Body of pancreas (tissue), 4 donors: ENCODE measurements at regions of chr16 and their contacts with region 1.

Region 1: DNA sequence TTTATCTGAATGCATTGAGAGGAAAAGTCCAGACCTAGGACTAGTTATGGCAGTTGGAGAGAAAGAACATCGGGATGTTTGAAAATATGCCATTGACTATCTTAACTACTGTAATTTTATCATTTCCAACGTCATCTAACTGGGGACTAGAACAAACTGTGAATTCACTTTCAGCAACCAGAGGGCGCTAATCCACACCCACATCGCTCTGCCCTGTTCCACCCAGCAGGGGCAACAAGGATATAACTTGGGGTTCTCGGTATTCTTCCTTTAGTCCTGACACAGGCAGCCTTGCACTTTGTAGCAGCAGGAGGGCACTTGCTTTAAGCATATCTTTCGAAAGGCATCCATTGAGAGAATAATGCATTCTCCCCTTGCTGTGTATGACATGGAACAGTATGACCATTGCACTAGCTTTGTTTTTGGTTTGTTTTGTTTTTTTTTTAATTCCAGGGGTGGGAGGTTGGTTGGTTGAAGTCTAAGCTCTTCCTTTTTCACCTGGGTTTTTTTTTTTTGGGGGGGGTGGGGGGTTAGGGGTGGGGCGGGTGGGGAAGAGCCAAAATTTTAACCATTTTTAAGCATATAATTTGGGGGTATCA is 31.5 kb downstream of the SIAH1 start:
- DNase-seq: peak; percentile 61 to 77 (median 68)
- ATAC-seq: peak; percentile 88
- H3K4me3 ChIP-seq: no peak overlapping the region
- H3K27ac ChIP-seq: no peak overlapping the region
- H3K4me1 ChIP-seq: no peaks in the 10 kb centered on the region
- H3K27me3 ChIP-seq: no peaks in the 10 kb centered on the region
- CTCF ChIP-seq: peak; percentile 72 to 97 (median 88)
- POLR2A ChIP-seq: no peak

Region 2: GRCh38 chr16:48284772-48285409 is 68.8 kb before region 1 on chr16:
- intact Hi-C with region 1: no loop called
- DNase-seq: no peak
- ATAC-seq: no peak
- H3K4me3 ChIP-seq: no peak overlapping the region
- H3K27ac ChIP-seq: peak overlapping the region in 1 of 4 donors; percentile 25
- H3K4me1 ChIP-seq: peaks cover 19% of the 10 kb centered on the region
- H3K27me3 ChIP-seq: no peaks in the 10 kb centered on the region
- CTCF ChIP-seq: no peak
- POLR2A ChIP-seq: no peak

Region 3: DNA sequence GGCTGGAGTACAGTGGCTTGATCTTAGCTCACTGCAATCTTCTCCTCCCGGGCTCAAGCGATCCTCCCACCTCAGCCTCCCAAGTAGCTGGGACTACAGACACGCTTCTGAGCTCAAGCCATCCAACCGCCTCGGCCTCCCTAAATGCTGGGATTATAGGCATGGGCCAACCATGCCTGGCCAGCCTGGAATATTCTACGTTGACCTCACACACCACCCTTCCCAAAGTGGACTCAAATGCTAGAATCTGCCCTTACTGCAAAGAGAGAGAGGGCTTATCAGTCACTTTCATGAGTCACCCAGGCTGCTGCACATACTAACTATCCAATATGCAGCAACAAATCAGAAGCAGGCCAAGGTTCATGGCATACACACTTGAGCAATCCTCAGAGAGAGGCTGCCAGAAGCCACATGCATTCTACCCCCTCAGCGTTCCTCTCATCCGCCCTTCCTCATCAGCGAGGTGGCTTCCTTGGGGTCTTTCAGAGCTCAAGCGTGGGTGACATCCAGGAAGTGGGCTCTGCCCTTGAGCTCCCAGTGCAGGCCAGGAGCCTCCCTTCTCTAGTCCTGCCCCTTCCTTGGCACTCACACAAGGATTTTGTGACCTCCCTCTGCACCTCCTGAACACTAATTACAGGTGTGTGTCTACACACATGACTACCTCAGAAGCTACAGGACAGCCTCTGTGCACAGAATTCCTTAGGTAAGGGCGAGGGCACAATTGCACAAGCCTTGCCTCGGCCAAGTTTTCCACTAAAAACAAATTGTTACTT is 56.4 kb after region 1 on chr16:
- intact Hi-C with region 1: no loop called
- DNase-seq: peak in 3 of 4 donors; percentile 10 to 76 (median 63)
- ATAC-seq: peak; percentile 68
- H3K4me3 ChIP-seq: no peak overlapping the region
- H3K27ac ChIP-seq: peak overlapping the region in 3 of 4 donors; percentile 12 to 59 (median 56)
- H3K4me1 ChIP-seq: peaks cover 9% of the 10 kb centered on the region
- H3K27me3 ChIP-seq: no peaks in the 10 kb centered on the region
- CTCF ChIP-seq: no peak
- POLR2A ChIP-seq: no peak

Region 4: DNA sequence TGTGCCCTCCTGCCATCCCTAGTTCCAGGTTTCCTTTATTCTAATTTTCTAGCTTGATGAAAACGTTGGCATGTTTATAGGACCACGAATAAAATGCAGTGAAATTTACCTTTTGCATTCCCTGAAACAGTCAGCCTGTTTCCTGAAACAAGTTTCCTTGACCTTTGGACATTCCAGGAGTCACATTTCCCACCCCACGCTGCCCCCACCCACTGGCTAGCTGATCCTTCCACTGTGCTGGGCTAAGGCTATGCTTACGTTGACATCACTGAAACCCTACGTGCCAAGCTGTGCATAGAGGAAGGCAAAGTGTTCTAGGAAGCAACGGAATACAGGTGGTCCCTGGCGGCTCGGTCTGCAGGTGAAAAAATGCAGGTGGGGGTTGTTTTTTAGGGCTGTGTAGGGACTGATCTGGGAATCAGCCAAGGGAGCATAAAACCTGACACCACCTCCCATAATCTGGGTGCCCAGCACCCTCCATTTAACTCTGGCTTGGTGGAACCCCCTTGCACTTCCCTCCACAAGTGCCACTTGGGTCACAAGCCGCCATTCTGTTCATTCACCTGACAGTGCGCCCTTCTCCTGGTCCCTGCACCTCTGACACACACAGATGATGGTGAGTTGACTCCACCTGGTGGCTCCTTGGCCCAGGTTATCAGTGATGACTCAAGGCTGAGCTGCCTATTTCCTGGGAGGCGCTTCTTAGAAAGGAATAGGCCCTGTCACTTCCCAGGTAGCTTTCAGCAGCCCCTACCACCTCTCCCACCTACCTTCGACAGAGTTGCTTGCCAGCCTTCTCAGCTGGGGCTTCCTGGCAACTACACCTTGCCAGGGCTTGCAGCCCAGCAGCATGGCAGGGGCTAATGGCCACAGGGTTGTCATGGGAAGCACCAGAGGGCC is 172.6 kb after region 1 on chr16:
- intact Hi-C with region 1: loop called (anchors 10 kb)
- DNase-seq: peak; percentile 38 to 67 (median 60)
- ATAC-seq: peak; percentile 67
- H3K4me3 ChIP-seq: no peak overlapping the region
- H3K27ac ChIP-seq: no peak overlapping the region
- H3K4me1 ChIP-seq: no peaks in the 10 kb centered on the region
- H3K27me3 ChIP-seq: no peaks in the 10 kb centered on the region
- CTCF ChIP-seq: peak in 4 of 7 experiments; percentile 42 to 56 (median 44)
- POLR2A ChIP-seq: no peak

Region 5: DNA sequence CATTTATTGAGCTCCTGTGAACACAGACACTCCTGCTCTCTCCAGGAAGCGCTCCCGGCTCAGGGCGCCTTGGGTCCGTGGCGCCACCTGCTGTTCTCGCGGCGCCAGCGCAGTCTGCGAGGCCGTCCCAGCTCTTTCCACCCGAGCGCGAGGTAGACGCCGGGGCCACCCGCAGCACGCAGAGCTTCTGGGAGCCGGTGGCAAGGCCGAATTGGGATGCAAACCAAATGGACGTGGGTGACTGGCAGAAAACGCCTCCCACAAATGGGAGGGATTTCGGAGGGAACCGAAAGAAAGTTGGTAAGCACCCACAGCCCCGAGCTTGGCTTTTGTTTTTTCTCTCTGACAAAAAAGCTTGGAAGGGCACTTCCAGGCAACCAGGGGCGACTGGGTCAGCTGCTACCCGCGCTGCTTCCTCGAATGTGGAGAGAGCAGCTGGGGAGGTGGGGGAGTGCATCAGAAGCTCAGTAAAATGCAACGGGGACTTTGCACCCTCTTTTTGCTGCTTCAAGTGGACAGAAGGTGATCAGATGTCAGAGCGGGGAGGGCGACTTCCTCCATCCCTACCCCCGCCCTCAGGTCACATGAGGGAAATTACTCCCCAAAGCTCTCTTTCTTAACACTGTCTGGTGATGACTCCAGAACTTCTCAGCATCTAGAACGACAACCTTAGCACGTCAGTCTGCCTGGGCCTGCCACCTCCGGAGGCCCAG is 269.8 kb after region 1 on chr16:
- intact Hi-C with region 1: loop called (anchors 5 kb)
- DNase-seq: peak; percentile 82 to 86 (median 86)
- ATAC-seq: peak; percentile 97
- H3K4me3 ChIP-seq: peak overlapping the region in 1 of 2 donors; percentile 8
- H3K27ac ChIP-seq: peak overlapping the region in 3 of 4 donors; percentile 39 to 79 (median 40)
- H3K4me1 ChIP-seq: peaks cover 12% of the 10 kb centered on the region
- H3K27me3 ChIP-seq: no peaks in the 10 kb centered on the region
- CTCF ChIP-seq: peak; percentile 95 to 99 (median 97)
- POLR2A ChIP-seq: peak in 2 of 3 donors; percentile 20 to 31

Region 6: GRCh38 chr16:48641770-48642169 is 288.1 kb after region 1 on chr16:
- intact Hi-C with region 1: no loop called
- DNase-seq: no peak
- ATAC-seq: no peak
- H3K4me3 ChIP-seq: no peak overlapping the region
- H3K27ac ChIP-seq: no peak overlapping the region
- H3K4me1 ChIP-seq: no peaks in the 10 kb centered on the region
- H3K27me3 ChIP-seq: no peaks in the 10 kb centered on the region
- CTCF ChIP-seq: no peak
- POLR2A ChIP-seq: no peak